ENCODE measurements at regions of chr1 and their contacts with region 1.

Region 1: DNA sequence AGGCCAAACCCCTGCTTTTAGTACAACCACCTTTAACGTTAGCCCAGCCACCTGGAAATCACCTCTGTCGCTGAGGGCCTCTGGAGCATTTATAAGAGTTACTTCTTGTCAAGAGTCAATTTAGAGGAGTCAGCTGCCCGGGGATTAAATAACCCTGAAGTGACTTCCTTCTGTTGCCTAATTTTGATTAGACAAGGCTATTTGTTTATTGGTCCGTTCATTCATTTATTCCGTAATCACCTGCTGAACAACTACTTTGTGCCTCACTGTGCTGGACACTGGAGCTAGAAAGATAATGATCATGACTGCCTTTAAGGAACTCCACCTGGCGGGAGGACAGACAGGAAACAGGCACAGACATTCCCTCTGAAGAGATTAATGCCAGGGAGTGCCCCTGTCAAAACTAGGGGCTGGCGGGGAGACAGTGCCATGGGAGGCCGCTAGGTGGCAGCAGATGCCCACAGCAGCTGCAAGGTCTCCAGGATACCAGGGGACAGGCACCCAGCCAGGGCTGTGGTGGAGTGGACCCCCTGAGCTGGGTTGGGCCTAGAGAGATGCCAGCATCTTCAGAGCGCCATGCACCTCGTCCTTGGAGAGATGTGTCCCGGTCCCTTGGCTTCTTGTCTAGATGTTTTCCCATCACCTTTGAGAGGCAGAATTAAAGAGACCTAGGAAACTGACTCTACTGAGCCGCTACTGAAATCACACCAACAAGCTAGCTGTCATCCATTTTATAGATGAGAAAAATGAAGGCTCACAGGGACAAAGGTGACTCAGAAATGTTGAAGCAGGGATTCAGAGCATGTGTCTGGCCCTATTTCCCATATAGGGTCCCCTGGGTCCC is 3.7 kb downstream of the REN start:
- DNase-seq: peak; percentile 95
- H3K27ac ChIP-seq: no peak overlapping the region
- CTCF ChIP-seq: peak; percentile 99

Region 2: DNA sequence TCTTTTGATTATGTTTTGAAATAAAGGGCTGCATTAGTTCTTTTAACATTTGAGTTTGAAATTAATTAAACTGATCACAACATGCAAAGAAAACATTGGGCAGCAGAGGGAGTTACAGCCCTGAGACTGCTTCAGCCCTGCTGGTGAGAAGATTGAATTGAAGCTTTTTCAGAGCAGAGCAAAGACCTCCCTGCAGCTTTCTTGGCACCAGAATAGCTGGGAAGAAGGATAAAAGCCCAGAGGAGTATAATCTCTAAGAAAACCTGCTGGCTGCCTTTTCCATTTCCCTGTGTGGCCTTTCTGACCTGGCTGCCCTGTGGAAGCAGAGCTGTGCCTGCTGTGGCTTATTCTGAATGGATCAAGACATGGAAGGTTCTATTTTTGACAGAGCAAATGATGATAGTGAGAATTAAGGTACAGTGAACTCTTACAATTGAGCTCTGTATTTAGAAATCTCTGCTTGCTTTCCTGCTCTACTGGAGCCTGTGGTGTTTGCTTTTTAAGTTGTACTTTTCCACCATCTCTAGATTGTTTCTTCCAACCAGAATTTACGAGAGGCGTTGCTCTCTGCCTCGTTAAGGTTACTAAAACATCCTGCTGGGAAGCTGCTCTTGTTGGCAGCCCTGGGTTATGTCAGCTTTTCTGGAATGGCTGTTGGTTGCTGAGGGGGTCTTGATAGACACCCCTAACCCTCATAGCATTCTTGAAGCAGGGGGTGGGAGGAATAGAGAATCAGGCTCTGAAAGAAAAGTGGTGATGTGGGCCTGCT is 291.2 kb before region 1 on chr1:
- CTCF ChIA-PET with region 1: interaction called, 24 read pairs
- POLR2A ChIA-PET with region 1: no interaction called
- DNase-seq: peak; percentile 94
- H3K27ac ChIP-seq: no peak overlapping the region
- CTCF ChIP-seq: peak; percentile 79

Region 3: DNA sequence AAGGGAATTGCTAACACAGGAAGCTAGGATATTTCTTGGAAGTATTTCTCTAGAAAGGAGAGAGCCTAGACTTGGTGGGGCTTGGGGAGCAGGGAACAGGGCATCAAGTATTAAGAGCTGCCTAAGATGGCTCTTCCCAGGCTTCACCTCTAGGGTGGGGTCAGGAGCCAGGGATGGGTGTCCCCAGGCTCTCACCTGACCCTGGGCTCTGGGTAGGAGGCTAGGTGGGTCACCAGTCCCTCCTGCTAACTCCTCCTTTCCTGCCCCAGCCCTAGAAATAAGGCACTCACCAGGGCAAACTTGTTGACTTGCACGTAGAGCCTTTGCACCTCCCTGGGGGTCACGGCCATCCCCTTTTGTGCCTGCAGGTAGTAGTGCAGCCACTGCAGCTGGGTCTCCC is 25.6 kb before region 1 on chr1:
- CTCF ChIA-PET with region 1: interaction called, 24 read pairs
- POLR2A ChIA-PET with region 1: no interaction called
- DNase-seq: no peak
- H3K27ac ChIP-seq: no peak overlapping the region
- CTCF ChIP-seq: no peak

Region 4: DNA sequence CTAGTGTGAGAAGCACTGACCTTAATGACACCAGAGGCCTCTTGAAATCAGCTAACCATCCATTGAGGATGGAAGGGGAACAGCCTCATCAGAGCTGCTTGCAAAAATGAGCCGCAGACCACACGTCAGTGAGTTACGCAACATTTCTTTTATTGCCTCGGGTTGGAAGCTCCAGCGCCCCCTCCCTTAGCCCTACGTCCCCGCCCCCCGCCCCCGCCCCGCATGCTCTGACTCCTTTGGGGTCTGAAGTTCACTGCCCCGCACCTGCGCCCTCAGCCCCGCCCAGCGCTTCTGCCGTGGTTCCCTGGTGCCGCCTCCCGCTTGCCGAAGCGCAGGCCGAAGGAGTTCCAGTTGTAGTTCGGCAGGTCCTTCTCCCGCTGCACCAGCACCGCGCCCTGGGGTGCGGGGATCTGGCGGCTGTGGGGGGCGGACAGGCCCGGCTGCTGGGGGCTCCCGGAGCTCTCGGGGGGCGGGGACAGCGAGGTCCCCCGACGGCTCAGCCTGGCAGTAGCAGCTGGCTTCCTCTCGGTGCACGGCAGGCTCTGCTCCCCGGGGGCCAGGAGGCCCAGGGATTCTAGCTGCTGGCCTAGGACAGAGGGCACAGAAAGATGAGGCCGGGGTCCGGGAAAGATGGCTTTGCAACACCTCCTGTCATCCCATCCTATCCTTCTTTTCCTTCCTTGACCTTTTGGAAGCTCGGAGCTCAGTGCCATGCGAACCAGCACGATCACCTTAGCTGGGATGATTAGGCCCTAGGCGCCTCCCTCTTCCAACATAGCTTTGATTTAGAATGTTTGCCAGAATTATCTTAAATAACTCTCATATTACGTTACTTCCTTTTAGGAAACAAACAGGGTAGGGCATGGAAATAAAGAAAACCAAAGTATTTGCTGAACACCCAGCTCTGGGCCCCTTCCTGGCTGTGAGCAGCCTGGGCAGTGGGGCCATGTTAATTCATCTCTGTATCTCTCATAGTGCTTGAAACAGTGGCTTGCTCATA is 28.1 kb after region 1 on chr1:
- CTCF ChIA-PET with region 1: interaction called, 13 read pairs
- POLR2A ChIA-PET with region 1: no interaction called
- DNase-seq: peak; percentile 55
- H3K27ac ChIP-seq: no peak overlapping the region
- CTCF ChIP-seq: no peak

Region 5: DNA sequence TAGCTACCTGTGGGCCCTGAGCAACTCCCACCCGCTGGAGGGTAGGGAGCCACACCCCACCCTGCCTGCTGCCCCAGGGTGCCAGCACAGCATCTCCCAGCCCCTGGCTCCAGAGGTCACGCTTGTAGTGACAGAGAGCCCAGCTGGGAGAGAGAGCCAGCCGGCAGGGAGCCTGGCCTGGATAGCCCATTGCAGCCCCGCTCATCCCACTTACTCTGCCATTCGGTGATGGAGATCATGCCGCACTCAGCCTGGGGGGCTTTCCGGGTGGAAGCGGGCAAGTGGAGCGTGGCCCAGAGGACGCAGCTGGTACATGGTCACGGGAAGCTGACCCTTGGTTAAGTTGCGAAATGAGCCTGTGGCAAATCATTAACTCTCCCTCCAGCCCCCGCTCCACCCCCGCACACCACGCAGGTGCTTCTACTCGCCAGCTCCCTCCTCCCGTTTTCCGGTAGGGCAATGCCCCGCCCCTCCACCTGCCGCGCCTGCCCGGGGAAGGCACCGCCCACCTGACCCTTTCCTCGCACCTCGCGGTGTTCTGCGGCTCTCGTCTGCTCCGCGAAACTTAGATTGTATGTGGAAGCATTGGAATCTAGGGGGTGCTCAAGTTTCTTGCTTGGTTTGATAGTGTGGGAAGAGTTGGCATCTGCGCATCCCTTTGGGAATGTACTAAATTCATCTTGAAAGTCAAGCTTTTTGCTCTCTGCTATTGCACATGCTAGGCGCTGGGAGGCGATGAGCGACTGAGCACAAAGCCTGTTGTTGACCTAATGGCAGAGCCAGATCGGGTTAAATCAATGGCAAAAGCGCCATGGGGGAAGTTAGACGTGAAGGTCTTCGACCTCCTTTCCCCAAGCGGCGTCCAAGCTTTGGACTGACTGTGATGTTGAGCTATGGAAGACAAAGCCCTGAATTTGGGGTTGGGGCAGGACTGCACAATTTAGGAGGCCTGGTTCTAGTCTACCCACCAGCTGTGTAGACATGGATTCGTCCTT is 51.5 kb after region 1 on chr1 and contains the start of gene GOLT1A:
- CTCF ChIA-PET with region 1: interaction called, 30 read pairs
- POLR2A ChIA-PET with region 1: no interaction called
- DNase-seq: peak; percentile 67
- H3K27ac ChIP-seq: no peak within 1 kb of the TSS
- CTCF ChIP-seq: peak; percentile 50

Region 6: GRCh38 chr1:204336421-204337035 is 174.1 kb after region 1 on chr1:
- CTCF ChIA-PET with region 1: no interaction called
- POLR2A ChIA-PET with region 1: no interaction called
- DNase-seq: no peak
- H3K27ac ChIP-seq: no peak overlapping the region
- CTCF ChIP-seq: no peak

Region 7: DNA sequence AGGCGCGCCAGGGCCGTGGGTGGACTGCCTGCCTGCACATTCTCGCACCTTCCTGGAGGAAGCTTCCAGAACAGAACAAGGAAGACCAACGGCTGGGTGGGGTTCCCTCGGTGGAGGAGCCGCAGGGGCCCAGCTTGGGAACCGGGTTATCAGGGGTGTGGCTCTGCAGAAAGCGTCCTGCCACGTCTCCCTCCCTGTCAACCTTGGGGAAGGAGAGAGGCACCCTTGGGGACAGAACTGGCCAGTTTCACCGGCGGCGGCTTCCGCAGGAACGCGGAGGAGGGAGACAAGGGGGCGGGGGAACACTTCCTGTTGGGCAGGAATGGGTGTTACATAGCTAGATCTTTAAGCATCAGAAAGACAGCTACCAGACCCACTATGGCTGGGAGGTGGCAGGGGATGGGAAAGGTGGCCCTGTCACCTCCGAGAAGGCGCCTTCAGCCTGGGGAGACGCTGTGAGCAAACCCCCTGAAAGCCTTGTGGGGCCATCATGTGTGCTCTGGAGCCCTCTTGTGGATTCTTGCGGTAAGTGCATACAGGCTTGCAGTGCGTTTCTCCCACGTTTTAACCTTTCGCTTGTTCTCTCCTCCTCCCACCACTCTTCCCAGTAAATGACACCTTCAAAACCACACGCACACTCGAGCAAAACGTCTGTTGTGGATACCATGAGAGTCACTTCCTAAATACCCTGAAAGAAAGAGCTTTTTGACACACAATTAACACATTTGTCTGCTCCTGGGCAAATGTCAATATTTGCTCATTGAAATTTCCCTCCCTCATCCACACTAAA is 201.1 kb after region 1 on chr1:
- CTCF ChIA-PET with region 1: interaction called, 101 read pairs
- POLR2A ChIA-PET with region 1: no interaction called
- DNase-seq: peak; percentile 81
- H3K27ac ChIP-seq: peak overlapping the region; percentile 48
- CTCF ChIP-seq: peak; percentile 93

Region 8: GRCh38 chr1:204506961-204507387 is 344.5 kb after region 1 on chr1:
- CTCF ChIA-PET with region 1: interaction called, 11 read pairs
- POLR2A ChIA-PET with region 1: no interaction called
- DNase-seq: peak; percentile 74
- H3K27ac ChIP-seq: peak overlapping the region; percentile 91
- CTCF ChIP-seq: no peak

Measured in RWPE1 (cell line).